MCF 10A (cell line): ENCODE measurements at regions of chr14 and their contacts with region 1.

Region 1: DNA sequence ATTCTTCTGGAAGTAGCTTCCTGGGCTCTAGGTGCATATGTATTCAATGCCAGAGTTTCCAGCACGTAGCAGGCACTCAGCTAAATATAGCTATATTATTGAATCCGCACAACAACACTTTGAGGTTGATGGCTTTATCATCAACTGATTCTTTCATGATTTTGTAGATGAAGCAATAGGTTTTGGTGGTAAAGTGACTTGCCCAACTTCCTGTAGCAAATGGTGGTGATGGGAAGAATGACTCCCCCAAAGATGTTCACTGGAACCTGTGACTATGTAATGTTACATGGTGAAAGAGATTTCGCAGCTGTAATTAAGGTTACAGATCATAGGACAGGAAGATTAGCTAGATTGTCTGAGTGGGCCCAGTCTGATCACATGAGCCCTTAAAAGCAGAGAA is 3.2 kb downstream of the TDRD9 start:
- DNase-seq: no peak
- H3K4me3 Mint-ChIP-seq: no peak overlapping the region
- H3K27ac Mint-ChIP-seq: no peak overlapping the region
- H3K4me1 Mint-ChIP-seq: peaks cover 23% of the 10 kb centered on the region
- H3K27me3 Mint-ChIP-seq: no peaks in the 10 kb centered on the region
- CTCF ChIP-seq: no peak

Region 2: GRCh38 chr14:103329401-103330347 is 601.7 kb before region 1 on chr14:
- CTCF ChIA-PET with region 1: no interaction called
- POLR2A ChIA-PET with region 1: no interaction called
- intact Hi-C with region 1: no loop called
- DNase-seq: peak; percentile 86
- H3K4me3 Mint-ChIP-seq: no peak overlapping the region
- H3K27ac Mint-ChIP-seq: no peak overlapping the region
- H3K4me1 Mint-ChIP-seq: no peaks in the 10 kb centered on the region
- H3K27me3 Mint-ChIP-seq: peaks cover 18% of the 10 kb centered on the region
- CTCF ChIP-seq: no peak

Region 3: GRCh38 chr14:103698574-103699254 is 232.7 kb before region 1 on chr14:
- CTCF ChIA-PET with region 1: no interaction called
- POLR2A ChIA-PET with region 1: no interaction called
- intact Hi-C with region 1: no loop called
- DNase-seq: no peak
- H3K4me3 Mint-ChIP-seq: no peak overlapping the region
- H3K27ac Mint-ChIP-seq: no peak overlapping the region
- H3K4me1 Mint-ChIP-seq: peaks cover 7% of the 10 kb centered on the region
- H3K27me3 Mint-ChIP-seq: no peaks in the 10 kb centered on the region
- CTCF ChIP-seq: no peak

Region 4: DNA sequence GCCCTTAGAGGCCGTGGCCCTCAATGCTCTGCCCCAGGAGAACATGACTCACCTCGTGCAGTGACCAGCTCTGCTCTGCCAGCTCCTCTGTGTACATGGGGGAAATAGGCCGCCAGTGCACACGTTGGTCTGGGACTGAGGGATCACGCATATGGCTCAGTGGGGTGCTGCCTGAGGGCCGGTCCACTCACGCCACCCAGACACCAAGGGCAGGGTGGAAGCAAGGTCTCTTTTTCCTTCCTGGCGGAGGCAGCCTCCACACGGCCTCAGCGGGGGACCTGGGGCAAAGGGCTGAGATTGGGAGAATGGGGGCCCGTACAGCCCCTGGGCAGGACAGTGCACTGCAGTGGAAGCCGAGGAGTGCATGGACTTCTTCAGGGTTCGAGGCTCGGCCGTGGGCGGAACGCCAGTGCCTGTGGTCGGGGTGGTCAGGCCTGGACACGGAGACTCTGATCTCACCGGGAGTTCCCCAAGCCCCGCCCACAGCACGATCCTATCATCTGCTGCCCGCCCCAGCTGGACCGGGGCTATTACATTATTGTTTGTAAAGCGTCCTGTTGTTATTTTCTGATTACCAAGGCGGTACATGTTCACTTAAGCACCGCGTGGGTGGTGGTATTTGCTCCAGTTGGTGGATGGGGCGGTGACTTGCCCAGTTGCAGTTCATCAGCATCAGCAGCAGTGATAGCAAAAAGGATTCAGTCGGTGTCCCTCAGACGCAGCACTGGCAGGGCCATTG is 41.9 kb before region 1 on chr14:
- CTCF ChIA-PET with region 1: no interaction called
- POLR2A ChIA-PET with region 1: no interaction called
- intact Hi-C with region 1: no loop called
- DNase-seq: peak; percentile 70
- H3K4me3 Mint-ChIP-seq: no peak overlapping the region
- H3K27ac Mint-ChIP-seq: no peak overlapping the region
- H3K4me1 Mint-ChIP-seq: peaks cover 13% of the 10 kb centered on the region
- H3K27me3 Mint-ChIP-seq: no peaks in the 10 kb centered on the region
- CTCF ChIP-seq: no peak

Region 5: DNA sequence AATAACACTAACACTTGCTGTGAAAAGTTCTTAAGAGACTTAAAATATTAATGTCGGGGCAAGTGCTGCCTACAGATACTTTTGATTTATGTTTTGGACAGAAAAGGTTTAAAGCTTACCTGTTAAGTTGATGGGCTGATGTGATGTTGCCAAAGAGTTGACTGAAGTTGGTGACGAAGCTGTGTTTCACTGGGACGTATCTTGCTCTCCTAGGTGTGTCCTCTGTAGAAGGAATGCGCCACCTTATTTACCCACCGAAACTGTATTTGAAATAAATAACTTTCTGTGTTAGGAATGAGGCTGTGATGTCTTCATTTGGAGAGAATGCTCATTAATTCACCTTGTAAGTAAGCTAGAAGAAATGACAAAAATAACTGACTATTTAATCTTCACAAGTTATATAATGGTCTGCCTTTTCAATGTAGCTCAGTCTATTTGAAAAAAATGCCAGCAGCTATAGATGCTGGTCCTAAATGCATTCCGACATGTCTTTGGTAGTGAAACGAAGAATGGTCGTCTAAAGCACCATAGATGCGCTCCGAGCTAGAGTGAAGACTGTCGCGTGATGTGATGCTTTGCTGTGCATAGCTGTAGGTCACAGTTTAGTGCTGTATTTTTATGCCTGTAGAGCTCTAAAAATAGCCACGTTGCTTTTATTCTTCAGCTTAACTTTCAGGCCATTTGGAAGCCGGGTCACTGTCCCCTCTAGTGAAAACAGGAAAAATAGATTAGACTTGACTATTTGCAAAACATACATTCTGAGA is 10.7 kb after region 1 on chr14 and contains the start of gene RD3L:
- CTCF ChIA-PET with region 1: interaction called, 5 read pairs
- POLR2A ChIA-PET with region 1: interaction called, 13 read pairs
- intact Hi-C with region 1: no loop called
- DNase-seq: no peak
- H3K4me3 Mint-ChIP-seq: no peak within 1 kb of the TSS
- H3K27ac Mint-ChIP-seq: no peak within 1 kb of the TSS
- H3K4me1 Mint-ChIP-seq: no peaks in the 10 kb centered on the region
- H3K27me3 Mint-ChIP-seq: peaks cover 27% of the 10 kb centered on the region
- CTCF ChIP-seq: no peak
- total RNA-seq, gene RD3L: not detected in 2 replicates